ENCODE measurements at regions of chr13 and their contacts with region 1.

Region 1: DNA sequence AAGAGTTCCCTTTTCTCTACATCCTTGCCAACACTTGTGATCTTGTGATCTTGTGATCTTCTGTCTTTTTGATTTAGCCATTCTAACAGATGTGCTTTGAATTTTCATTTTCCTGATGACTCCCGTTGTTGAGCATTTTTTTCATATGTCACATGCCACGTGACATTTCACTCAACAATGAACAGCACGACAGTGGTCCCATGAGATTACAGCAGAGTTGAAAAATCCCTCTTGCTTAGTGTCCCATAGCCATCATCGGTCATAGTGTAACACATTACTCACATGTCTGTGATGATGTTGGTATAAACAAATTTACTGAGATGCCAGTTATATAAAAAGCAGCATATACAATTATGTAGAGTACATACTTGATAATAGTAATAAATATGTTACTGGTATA is 256.1 kb upstream of the OBI1 start:
- DNase-seq: no peak
- ATAC-seq: no peak
- H3K4me3 ChIP-seq: no peak overlapping the region
- H3K27ac ChIP-seq: no peak overlapping the region
- H3K4me1 ChIP-seq: no peaks in the 10 kb centered on the region
- H3K27me3 ChIP-seq: no peaks in the 10 kb centered on the region
- CTCF ChIP-seq: no peak
- POLR2A ChIP-seq: no peak

Region 2: GRCh38 chr13:78934336-78934735 is 19.3 kb after region 1 on chr13:
- intact Hi-C with region 1: loop called in 1 of 10 experiments (anchors 1 kb)
- DNase-seq: peak in 1 of 5 donors; percentile 41
- ATAC-seq: no peak
- H3K4me3 ChIP-seq: no peak overlapping the region
- H3K27ac ChIP-seq: no peak overlapping the region
- H3K4me1 ChIP-seq: no peaks in the 10 kb centered on the region
- H3K27me3 ChIP-seq: no peaks in the 10 kb centered on the region
- CTCF ChIP-seq: no peak
- POLR2A ChIP-seq: no peak